ENCODE measurements at regions of chr3 and their contacts with region 1.

Region 1: GRCh38 chr3:119240591-119241434 is at the start of gene B4GALT4:
- DNase-seq: peak; percentile 83
- ATAC-seq: peak; percentile 90
- H3K4me3 ChIP-seq: peak within 1 kb of the TSS; percentile 57 to 82 (median 72)
- H3K4me3 Mint-ChIP-seq: peak within 1 kb of the TSS; percentile 86
- H3K27ac ChIP-seq: peak within 1 kb of the TSS; percentile 62 to 93
- H3K27ac Mint-ChIP-seq: peak within 1 kb of the TSS; percentile 81
- H3K4me1 ChIP-seq: peaks cover 30 to 34% of the 10 kb centered on the region in 2 donors
- H3K4me1 Mint-ChIP-seq: peaks cover 30% of the 10 kb centered on the region
- H3K27me3 ChIP-seq: no peaks in the 10 kb centered on the region
- H3K27me3 Mint-ChIP-seq: no peaks in the 10 kb centered on the region
- CTCF ChIP-seq: no peak
- total RNA-seq, gene B4GALT4: 19.3 and 21.9 TPM in 2 replicates

Region 2: GRCh38 chr3:118641608-118642007 is 599.2 kb before region 1 on chr3:
- CTCF ChIA-PET with region 1: no interaction called
- POLR2A ChIA-PET with region 1: no interaction called
- intact Hi-C with region 1: no loop called
- DNase-seq: no peak
- ATAC-seq: no peak
- H3K4me3 ChIP-seq: no peak overlapping the region
- H3K4me3 Mint-ChIP-seq: no peak overlapping the region
- H3K27ac ChIP-seq: no peak overlapping the region
- H3K27ac Mint-ChIP-seq: no peak overlapping the region
- H3K4me1 ChIP-seq: no peaks in the 10 kb centered on the region
- H3K4me1 Mint-ChIP-seq: no peaks in the 10 kb centered on the region
- H3K27me3 ChIP-seq: no peaks in the 10 kb centered on the region
- H3K27me3 Mint-ChIP-seq: peaks cover 4% of the 10 kb centered on the region
- CTCF ChIP-seq: no peak

Region 3: GRCh38 chr3:118884748-118885206 is 356.0 kb before region 1 on chr3:
- CTCF ChIA-PET with region 1: interaction called, 78 read pairs
- POLR2A ChIA-PET with region 1: interaction called, 3 read pairs
- intact Hi-C with region 1: no loop called
- DNase-seq: peak; percentile 57
- ATAC-seq: peak; percentile 78
- H3K4me3 ChIP-seq: no peak overlapping the region
- H3K4me3 Mint-ChIP-seq: no peak overlapping the region
- H3K27ac ChIP-seq: no peak overlapping the region
- H3K27ac Mint-ChIP-seq: no peak overlapping the region
- H3K4me1 ChIP-seq: no peaks in the 10 kb centered on the region
- H3K4me1 Mint-ChIP-seq: no peaks in the 10 kb centered on the region
- H3K27me3 ChIP-seq: peaks cover 0 to 3% (median 1%) of the 10 kb centered on the region in 4 experiments
- H3K27me3 Mint-ChIP-seq: peaks cover 28% of the 10 kb centered on the region
- CTCF ChIP-seq: peak; percentile 90

Region 4: DNA sequence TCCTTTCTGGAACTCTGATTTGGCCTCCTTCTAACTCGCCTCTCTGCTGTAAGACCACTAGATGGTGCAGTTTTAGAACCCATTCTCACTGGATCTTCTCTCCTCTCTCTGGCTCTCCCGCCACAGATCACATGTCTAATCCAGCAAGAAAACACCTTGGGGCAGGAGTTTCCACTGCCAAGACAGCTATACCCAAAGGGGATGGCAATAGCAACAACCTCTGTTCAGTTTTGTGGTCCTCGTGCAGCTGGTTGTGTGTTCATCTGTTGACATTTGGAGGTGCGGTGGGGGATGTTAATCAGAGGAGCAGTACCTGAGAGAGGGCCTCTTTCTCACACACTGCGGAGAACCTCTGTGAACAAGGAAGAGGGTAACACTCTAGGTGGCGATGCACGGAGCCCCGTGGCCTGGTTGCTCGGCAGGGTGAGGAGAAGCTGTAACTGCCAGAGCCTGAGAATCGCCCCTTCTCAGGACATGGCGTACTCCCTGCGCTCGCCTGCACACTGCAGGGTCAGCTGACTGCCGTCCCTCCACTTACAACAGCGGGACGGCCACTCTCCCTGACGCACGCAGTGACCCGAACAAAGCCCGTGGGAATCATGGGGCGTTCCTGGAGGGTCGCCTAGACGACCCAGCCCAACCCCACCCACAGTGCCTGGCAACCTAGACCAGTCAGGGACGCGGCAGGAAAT is 95.2 kb before region 1 on chr3 and contains the start of gene TEX55:
- CTCF ChIA-PET with region 1: interaction called, 13 read pairs
- POLR2A ChIA-PET with region 1: no interaction called
- intact Hi-C with region 1: no loop called
- DNase-seq: peak; percentile 18
- ATAC-seq: no peak
- H3K4me3 ChIP-seq: no peak within 1 kb of the TSS
- H3K4me3 Mint-ChIP-seq: no peak within 1 kb of the TSS
- H3K27ac ChIP-seq: no peak within 1 kb of the TSS
- H3K27ac Mint-ChIP-seq: no peak within 1 kb of the TSS
- H3K4me1 ChIP-seq: no peaks in the 10 kb centered on the region
- H3K4me1 Mint-ChIP-seq: no peaks in the 10 kb centered on the region
- H3K27me3 ChIP-seq: no peaks in the 10 kb centered on the region
- H3K27me3 Mint-ChIP-seq: no peaks in the 10 kb centered on the region
- CTCF ChIP-seq: peak; percentile 35
- total RNA-seq, gene TEX55: not detected in 2 replicates

Region 5: GRCh38 chr3:119293871-119294695 is 53.3 kb after region 1 on chr3 and contains the start of gene ARHGAP31:
- CTCF ChIA-PET with region 1: interaction called, 4 read pairs
- POLR2A ChIA-PET with region 1: interaction called, 4 read pairs
- intact Hi-C with region 1: loop called (anchors 2 kb)
- DNase-seq: peak; percentile 89
- ATAC-seq: peak; percentile 76
- H3K4me3 ChIP-seq: peak within 1 kb of the TSS; percentile 61 to 89 (median 80)
- H3K4me3 Mint-ChIP-seq: peak within 1 kb of the TSS; percentile 87
- H3K27ac ChIP-seq: peak within 1 kb of the TSS; percentile 91 to 96
- H3K27ac Mint-ChIP-seq: peak within 1 kb of the TSS; percentile 91
- H3K4me1 ChIP-seq: peaks cover 30 to 46% of the 10 kb centered on the region in 2 donors
- H3K4me1 Mint-ChIP-seq: peaks cover 58% of the 10 kb centered on the region
- H3K27me3 ChIP-seq: peaks cover 0 to 7% (median 0%) of the 10 kb centered on the region in 4 experiments
- H3K27me3 Mint-ChIP-seq: no peaks in the 10 kb centered on the region
- CTCF ChIP-seq: no peak
- total RNA-seq, gene ARHGAP31: 7.8 and 8.3 TPM in 2 replicates

Region 6: GRCh38 chr3:119352849-119353502 is 112.2 kb after region 1 on chr3:
- CTCF ChIA-PET with region 1: interaction called, 11 read pairs
- POLR2A ChIA-PET with region 1: no interaction called
- intact Hi-C with region 1: no loop called
- DNase-seq: peak; percentile 63
- ATAC-seq: peak; percentile 35
- H3K4me3 ChIP-seq: no peak overlapping the region
- H3K4me3 Mint-ChIP-seq: peak overlapping the region; percentile 46
- H3K27ac ChIP-seq: peak overlapping the region in 1 of 2 donors; percentile 56
- H3K27ac Mint-ChIP-seq: peak overlapping the region; percentile 51
- H3K4me1 ChIP-seq: peaks cover 22 to 29% of the 10 kb centered on the region in 2 donors
- H3K4me1 Mint-ChIP-seq: peaks cover 36% of the 10 kb centered on the region
- H3K27me3 ChIP-seq: no peaks in the 10 kb centered on the region
- H3K27me3 Mint-ChIP-seq: no peaks in the 10 kb centered on the region
- CTCF ChIP-seq: peak; percentile 61

Region 7: GRCh38 chr3:119498186-119498987 is 257.6 kb after region 1 on chr3 and contains the start of gene TIMMDC1:
- CTCF ChIA-PET with region 1: interaction called, 4 read pairs
- POLR2A ChIA-PET with region 1: no interaction called
- intact Hi-C with region 1: loop called (anchors 1 kb)
- DNase-seq: peak; percentile 97
- ATAC-seq: peak; percentile 99
- H3K4me3 ChIP-seq: peak within 1 kb of the TSS; percentile 86 to 98 (median 94)
- H3K4me3 Mint-ChIP-seq: peak within 1 kb of the TSS; percentile 100
- H3K27ac ChIP-seq: peak within 1 kb of the TSS; percentile 82 to 91
- H3K27ac Mint-ChIP-seq: peak within 1 kb of the TSS; percentile 98
- H3K4me1 ChIP-seq: peaks cover 16 to 18% of the 10 kb centered on the region in 2 donors
- H3K4me1 Mint-ChIP-seq: peaks cover 26% of the 10 kb centered on the region
- H3K27me3 ChIP-seq: no peaks in the 10 kb centered on the region
- H3K27me3 Mint-ChIP-seq: no peaks in the 10 kb centered on the region
- CTCF ChIP-seq: no peak
- total RNA-seq, gene TIMMDC1: 58.5 and 70.9 TPM in 2 replicates

Region 8: DNA sequence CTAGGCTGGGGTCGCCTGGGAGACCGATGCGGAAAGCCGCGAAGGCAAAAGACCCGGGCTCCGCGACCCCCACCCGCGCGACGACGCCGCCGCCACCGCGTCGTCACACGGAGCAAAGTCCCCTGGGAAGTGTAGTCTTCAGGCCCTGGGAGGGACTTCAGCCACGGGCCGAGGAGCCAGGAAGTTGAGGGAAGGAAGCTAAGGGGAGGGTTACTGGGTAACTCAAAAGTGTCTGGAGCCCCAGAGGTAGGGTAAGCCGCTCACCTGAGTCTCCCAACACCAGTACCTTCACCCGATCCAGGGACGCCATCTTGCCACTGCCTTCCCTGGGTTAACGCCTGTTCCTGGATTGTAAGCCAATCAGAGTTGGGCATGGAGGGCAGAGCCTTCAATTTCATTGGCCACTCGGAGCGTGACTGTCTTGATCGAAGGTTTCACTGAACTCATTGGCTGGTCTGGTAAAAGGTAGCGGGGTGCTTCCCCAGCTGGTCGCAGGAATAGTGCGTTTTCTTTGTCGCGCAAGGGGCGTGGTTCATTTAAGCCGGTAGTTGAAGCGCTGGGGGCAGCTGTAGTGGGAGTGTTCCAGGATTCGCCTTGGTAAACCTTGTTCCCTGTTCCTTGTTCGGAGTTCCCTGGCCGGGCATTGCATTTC is 1501.5 kb after region 1 on chr3 and contains the starts of genes GTF2E1 and RABL3:
- CTCF ChIA-PET with region 1: no interaction called
- POLR2A ChIA-PET with region 1: no interaction called
- intact Hi-C with region 1: loop called (anchors 2 kb)
- DNase-seq: peak; percentile 98
- ATAC-seq: peak; percentile 96
- H3K4me3 ChIP-seq: peak within 1 kb of the TSS; percentile 78 to 98 (median 94)
- H3K4me3 Mint-ChIP-seq: peak within 1 kb of the TSS; percentile 95
- H3K27ac ChIP-seq: peak within 1 kb of the TSS; percentile 99 to 100
- H3K27ac Mint-ChIP-seq: peak within 1 kb of the TSS; percentile 96
- H3K4me1 ChIP-seq: peaks cover 12 to 15% of the 10 kb centered on the region in 2 donors
- H3K4me1 Mint-ChIP-seq: peaks cover 29% of the 10 kb centered on the region
- H3K27me3 ChIP-seq: no peaks in the 10 kb centered on the region
- H3K27me3 Mint-ChIP-seq: no peaks in the 10 kb centered on the region
- CTCF ChIP-seq: no peak
- total RNA-seq, gene GTF2E1: 23.0 and 24.7 TPM in 2 replicates
- total RNA-seq, gene RABL3: 18.8 and 19.5 TPM in 2 replicates

Measured in B cell (primary cell).